ENCODE measurements at regions of chrX and their contacts with region 1.

Region 1: GRCh38 chrX:47568656-47569295 is 7.8 kb downstream of the ARAF start:
- DNase-seq: no peak
- H3K4me3 ChIP-seq: no peak overlapping the region
- H3K27ac ChIP-seq: no peak overlapping the region
- H3K4me1 ChIP-seq: no peaks in the 10 kb centered on the region
- H3K27me3 ChIP-seq: peaks cover 0 to 36% of the 10 kb centered on the region in 2 donors
- CTCF ChIP-seq: no peak
- POLR2A ChIP-seq: no peak

Region 2: GRCh38 chrX:47366028-47366722 is 202.6 kb before region 1 on chrX:
- intact Hi-C with region 1: no loop called
- DNase-seq: peak in 1 of 2 donors; percentile 40
- H3K4me3 ChIP-seq: peak overlapping the region; percentile 33 to 65 (median 49)
- H3K27ac ChIP-seq: peak overlapping the region; percentile 61 to 63
- H3K4me1 ChIP-seq: no peaks in the 10 kb centered on the region
- H3K27me3 ChIP-seq: no peaks in the 10 kb centered on the region
- CTCF ChIP-seq: no peak
- POLR2A ChIP-seq: no peak

Region 3: DNA sequence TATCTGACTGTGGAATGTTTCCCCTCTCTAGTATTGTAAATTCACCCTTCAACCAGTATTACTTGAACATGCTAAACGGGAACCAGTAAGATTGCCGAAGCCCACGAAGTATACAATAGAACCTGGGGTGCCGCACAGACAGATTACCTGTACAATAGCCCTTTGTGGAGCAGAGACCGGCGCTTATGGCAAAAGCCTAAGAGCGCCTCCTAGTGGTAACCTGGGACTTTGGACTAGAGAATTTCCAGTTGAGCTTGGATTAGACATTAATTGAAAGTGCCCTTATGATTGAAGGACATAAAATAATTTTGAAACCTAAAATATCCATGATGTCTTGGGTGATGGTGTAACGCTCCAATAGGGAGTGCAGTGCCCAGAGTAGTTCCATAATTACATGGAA is 184.3 kb before region 1 on chrX:
- intact Hi-C with region 1: no loop called
- DNase-seq: peak; percentile 44 to 60
- H3K4me3 ChIP-seq: no peak overlapping the region
- H3K27ac ChIP-seq: no peak overlapping the region
- H3K4me1 ChIP-seq: no peaks in the 10 kb centered on the region
- H3K27me3 ChIP-seq: peaks cover 0 to 11% of the 10 kb centered on the region in 2 donors
- CTCF ChIP-seq: peak; percentile 17 to 59 (median 57)
- POLR2A ChIP-seq: no peak

Region 4: DNA sequence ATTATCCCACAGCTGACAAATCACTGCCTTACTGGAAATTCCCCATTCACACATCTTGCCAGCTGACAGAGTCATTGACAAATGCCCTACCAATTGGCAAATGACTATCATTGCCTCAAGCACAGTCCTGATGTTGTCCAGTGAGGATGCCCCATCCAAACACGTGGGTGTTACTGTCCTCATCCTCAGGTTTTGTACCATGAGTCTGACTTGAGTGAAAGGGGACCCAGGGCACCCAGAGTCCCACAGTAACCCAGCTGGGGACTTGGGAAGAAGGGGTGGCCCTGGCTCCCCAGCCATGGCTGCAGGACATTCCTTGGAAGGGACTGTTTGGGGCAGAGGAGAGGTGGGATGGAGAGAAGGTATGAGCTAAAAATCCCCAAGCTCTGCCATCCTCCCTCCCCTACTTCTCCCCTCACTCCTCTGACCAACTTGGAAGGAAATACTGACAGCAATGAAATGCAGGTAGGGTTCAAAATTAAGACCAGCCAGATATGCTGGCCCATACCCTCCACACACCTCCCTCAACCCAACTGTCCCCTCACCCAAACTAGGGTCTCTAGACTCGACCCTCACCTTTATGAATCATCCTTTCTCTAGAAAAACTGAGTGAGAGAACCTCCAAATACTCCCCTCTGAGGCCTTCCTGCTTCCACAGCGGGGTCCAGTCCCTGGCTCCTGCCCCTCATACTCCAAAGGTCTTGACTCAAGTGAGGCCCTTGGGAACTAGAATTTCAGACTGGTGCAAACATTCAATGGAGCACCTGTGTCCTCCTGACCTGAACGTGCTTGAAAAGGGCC is 18.5 kb after region 1 on chrX:
- intact Hi-C with region 1: no loop called
- DNase-seq: no peak
- H3K4me3 ChIP-seq: no peak overlapping the region
- H3K27ac ChIP-seq: no peak overlapping the region
- H3K4me1 ChIP-seq: no peaks in the 10 kb centered on the region
- H3K27me3 ChIP-seq: peaks cover 0 to 27% of the 10 kb centered on the region in 2 donors
- CTCF ChIP-seq: no peak
- POLR2A ChIP-seq: no peak

Region 5: DNA sequence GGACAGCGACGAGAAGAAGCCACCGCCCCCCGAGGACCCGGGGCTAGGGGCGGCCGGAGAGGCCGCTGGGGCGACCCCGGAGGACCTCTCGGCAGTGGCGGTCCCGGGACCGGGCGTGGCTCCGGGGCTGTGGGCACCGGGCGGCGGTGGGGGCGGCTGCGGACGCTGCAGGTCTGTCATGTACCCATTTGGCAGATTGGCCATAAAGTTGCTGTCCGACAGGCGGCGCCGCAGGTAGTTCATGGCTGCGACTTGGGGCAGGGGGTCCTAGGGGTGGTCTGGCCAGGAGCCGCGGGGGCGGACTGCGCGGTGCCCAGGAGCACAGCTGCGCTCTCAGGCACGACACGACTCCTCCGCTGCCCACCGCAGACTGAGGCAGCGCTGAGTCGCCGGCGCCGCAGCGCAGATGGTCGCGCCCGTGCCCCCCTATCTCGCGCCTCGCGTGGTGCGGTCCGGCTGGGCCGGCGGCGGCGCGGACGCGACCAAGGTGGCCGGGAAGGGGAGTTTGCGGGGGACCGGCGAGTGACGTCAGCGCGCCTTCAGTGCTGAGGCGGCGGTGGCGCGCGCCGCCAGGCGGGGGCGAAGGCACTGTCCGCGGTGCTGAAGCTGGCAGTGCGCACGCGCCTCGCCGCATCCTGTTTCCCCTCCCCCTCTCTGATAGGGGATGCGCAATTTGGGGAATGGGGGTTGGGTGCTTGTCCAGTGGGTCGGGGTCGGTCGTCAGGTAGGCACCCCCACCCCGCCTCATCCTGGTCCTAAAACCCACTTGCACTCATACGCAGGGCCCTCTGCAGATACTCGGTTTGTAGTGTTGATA is 50.9 kb after region 1 on chrX and contains the start of gene SYN1:
- intact Hi-C with region 1: loop called (anchors 10 kb)
- DNase-seq: peak; percentile 57 to 74
- H3K4me3 ChIP-seq: peak within 1 kb of the TSS; percentile 23 to 62 (median 37)
- H3K27ac ChIP-seq: no peak within 1 kb of the TSS
- H3K4me1 ChIP-seq: no peaks in the 10 kb centered on the region
- H3K27me3 ChIP-seq: peaks cover 0 to 35% of the 10 kb centered on the region in 2 donors
- CTCF ChIP-seq: no peak
- POLR2A ChIP-seq: no peak
- total RNA-seq, gene SYN1: not detected

Region 6: DNA sequence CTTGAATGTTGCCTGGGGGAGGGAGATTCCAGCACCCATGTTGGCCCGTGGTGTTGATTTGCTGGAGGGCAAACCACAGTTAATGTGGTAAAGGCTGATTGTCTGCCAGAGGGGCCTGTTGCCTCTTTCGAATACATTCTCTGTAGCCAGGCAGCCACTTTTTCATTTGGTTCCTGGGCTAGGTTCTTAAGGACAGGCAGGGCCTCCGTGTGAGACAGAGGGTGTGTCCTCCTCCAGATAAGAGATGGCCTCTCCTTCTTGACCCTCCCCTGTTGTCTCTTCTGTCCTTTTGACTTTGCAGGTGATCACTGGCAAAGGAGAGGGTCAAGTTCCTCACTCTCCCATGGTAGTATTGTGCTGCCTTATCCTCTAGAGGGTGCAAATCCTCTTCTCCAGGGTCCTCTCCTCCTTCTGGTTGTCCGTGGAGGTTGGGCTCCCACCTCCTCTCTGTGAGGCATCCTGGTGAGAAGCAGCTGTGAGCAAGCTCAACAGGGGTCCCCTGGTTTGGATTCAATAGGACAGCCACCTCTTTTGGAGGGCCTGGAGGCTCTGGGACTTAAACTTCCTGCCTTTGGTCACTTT is 390.1 kb after region 1 on chrX:
- intact Hi-C with region 1: no loop called
- DNase-seq: no peak
- H3K4me3 ChIP-seq: no peak overlapping the region
- H3K27ac ChIP-seq: no peak overlapping the region
- H3K4me1 ChIP-seq: no peaks in the 10 kb centered on the region
- H3K27me3 ChIP-seq: peaks cover 0 to 4% of the 10 kb centered on the region in 2 donors
- CTCF ChIP-seq: no peak
- POLR2A ChIP-seq: no peak

Region 7: GRCh38 chrX:48957827-48958634 is 1389.3 kb after region 1 on chrX:
- intact Hi-C with region 1: loop called (anchors 5 kb)
- DNase-seq: peak; percentile 92 to 98
- H3K4me3 ChIP-seq: peak overlapping the region; percentile 61 to 82 (median 66)
- H3K27ac ChIP-seq: peak overlapping the region; percentile 94 to 98
- H3K4me1 ChIP-seq: no peaks in the 10 kb centered on the region
- H3K27me3 ChIP-seq: peaks cover 0 to 36% of the 10 kb centered on the region in 2 donors
- CTCF ChIP-seq: no peak
- POLR2A ChIP-seq: peak; percentile 65

Region 8: DNA sequence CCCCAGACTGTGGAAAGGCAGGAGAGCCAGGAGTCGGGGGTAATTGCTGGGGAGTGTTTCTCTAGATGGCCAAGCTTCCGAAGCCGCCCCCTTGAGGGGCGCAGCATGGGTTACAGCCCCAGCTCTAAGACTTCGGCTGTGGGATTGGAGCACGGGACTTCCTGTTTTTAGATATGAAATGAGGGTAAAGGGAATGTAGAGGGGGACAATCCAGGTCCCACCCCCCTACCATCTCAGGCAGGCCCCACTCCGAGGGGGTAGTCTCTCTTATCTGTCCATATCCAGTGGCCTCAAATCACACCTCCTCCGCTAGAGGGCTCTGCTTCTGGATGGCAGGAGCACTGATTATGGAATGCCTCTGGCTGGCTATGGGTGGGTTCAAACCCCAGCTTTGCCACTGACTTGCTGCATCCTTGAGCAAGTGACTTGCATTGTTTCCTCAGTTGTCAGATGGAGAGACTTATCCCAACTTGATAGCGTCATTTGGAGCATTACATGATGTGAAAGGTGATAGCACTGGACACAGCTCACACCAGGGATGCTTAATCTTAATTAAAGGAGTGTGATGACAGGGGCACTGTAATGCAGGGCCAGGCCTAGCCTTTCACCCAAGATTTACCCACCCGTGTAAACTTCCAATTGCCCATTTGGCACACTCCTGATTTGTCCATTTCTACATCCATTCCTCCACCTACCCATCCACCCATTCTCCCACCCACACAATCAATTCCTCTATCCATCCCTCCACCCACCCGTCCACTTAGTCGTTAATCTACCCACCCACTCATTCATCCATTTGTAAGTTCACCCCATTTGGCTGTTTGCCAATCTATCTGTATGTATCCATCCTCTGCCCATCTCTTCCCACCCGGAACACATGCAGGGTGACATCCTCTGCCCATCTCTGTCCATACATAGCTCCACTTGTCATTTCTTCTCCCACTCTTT is 1403.7 kb after region 1 on chrX:
- intact Hi-C with region 1: loop called (anchors 5 kb)
- DNase-seq: no peak
- H3K4me3 ChIP-seq: peak overlapping the region; percentile 33 to 61 (median 47)
- H3K27ac ChIP-seq: peak overlapping the region; percentile 18 to 50
- H3K4me1 ChIP-seq: no peaks in the 10 kb centered on the region
- H3K27me3 ChIP-seq: peaks cover 0 to 48% of the 10 kb centered on the region in 2 donors
- CTCF ChIP-seq: peak in 2 of 3 donors; percentile 15 to 18
- POLR2A ChIP-seq: no peak